Endothelial cell of umbilical vein (primary cell): ENCODE measurements at regions of chr3 and their contacts with region 1.

Region 1: DNA sequence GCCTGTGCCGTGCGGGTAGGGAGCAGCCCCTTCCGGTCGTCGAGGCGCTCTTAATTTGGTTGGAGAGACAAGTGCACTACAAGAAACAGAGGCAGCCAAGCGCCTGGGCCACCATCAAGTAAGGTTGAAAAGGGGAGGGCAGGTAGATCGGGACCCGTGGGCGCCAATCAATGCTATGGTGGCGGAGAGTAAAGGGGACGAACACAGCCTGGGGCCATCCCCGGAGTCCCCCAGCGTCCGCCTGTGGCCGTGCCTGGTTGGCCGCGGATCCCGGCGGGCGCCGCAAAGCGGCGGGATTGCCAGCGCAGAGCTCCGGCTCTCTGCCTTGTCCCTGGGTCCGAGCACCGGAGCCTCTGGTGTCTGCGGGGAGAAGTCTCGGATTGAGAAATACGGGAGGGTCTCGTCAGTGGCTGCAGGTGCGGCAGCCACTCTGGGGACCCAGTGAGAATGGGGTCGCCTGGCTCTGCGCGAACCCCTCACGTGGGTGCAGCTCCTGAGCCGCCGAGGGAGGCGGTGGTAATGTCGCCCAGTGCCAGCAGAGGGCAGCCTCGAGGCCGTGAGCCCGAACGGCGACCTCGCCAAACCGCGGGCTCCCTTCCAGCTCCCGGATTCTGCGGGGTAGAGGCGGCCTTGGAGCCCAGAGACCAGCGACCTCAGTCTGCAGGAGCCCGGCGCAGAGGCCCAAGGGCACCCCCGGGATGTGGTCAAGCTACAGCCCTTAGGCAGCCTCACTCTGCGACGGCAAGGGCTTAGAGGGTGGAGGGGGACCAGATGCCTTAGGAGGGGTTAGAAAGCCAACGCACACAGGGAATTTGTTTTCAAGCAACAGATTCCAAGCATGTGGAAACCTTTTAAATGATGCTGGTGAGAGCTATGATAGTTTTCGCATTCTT is 10.8 kb downstream of the FOXL2 start:
- DNase-seq: peak; percentile 59
- H3K4me3 ChIP-seq: peak overlapping the region in 2 of 3 experiments; percentile 0 to 25
- H3K27ac ChIP-seq: no peak overlapping the region
- H3K4me1 ChIP-seq: peaks cover 7% of the 10 kb centered on the region
- H3K27me3 ChIP-seq: peaks cover 54 to 66% of the 10 kb centered on the region in 2 experiments
- CTCF ChIP-seq: peak; percentile 84 to 94
- POLR2A ChIP-seq: no peak

Region 2: GRCh38 chr3:138479438-138479863 is 456.6 kb before region 1 on chr3:
- CTCF ChIA-PET with region 1: interaction called, 13 read pairs
- POLR2A ChIA-PET with region 1: no interaction called
- dilution Hi-C with region 1: no loop called
- intact Hi-C with region 1: loop called (anchors 5 kb)
- DNase-seq: peak; percentile 55
- H3K4me3 ChIP-seq: no peak overlapping the region
- H3K27ac ChIP-seq: no peak overlapping the region
- H3K4me1 ChIP-seq: no peaks in the 10 kb centered on the region
- H3K27me3 ChIP-seq: no peaks in the 10 kb centered on the region
- CTCF ChIP-seq: peak; percentile 79 to 87
- POLR2A ChIP-seq: no peak

Region 3: GRCh38 chr3:138862924-138863775 is 72.9 kb before region 1 on chr3:
- CTCF ChIA-PET with region 1: no interaction called
- POLR2A ChIA-PET with region 1: no interaction called
- dilution Hi-C with region 1: no loop called
- intact Hi-C with region 1: no loop called
- DNase-seq: peak; percentile 70
- H3K4me3 ChIP-seq: no peak overlapping the region
- H3K27ac ChIP-seq: peak overlapping the region; percentile 50
- H3K4me1 ChIP-seq: peaks cover 17% of the 10 kb centered on the region
- H3K27me3 ChIP-seq: no peaks in the 10 kb centered on the region
- CTCF ChIP-seq: no peak
- POLR2A ChIP-seq: no peak

Region 4: GRCh38 chr3:138909904-138910303 is 26.2 kb before region 1 on chr3:
- CTCF ChIA-PET with region 1: no interaction called
- POLR2A ChIA-PET with region 1: no interaction called
- dilution Hi-C with region 1: no loop called
- intact Hi-C with region 1: no loop called
- DNase-seq: no peak
- H3K4me3 ChIP-seq: no peak overlapping the region
- H3K27ac ChIP-seq: no peak overlapping the region
- H3K4me1 ChIP-seq: peaks cover 3% of the 10 kb centered on the region
- H3K27me3 ChIP-seq: no peaks in the 10 kb centered on the region
- CTCF ChIP-seq: no peak
- POLR2A ChIP-seq: no peak

Region 5: GRCh38 chr3:138946181-138947059 is 10.3 kb after region 1 on chr3:
- CTCF ChIA-PET with region 1: interaction called, 63 read pairs
- POLR2A ChIA-PET with region 1: no interaction called
- dilution Hi-C with region 1: no loop called
- intact Hi-C with region 1: no loop called
- DNase-seq: no peak
- H3K4me3 ChIP-seq: peak overlapping the region in 2 of 3 experiments; percentile 27 to 29
- H3K27ac ChIP-seq: no peak overlapping the region
- H3K4me1 ChIP-seq: peaks cover 16% of the 10 kb centered on the region
- H3K27me3 ChIP-seq: peaks cover 79 to 99% of the 10 kb centered on the region in 2 experiments
- CTCF ChIP-seq: peak; percentile 14 to 27
- POLR2A ChIP-seq: no peak

Region 6: GRCh38 chr3:138960417-138960852 is 24.3 kb after region 1 on chr3:
- CTCF ChIA-PET with region 1: interaction called, 11 read pairs
- POLR2A ChIA-PET with region 1: no interaction called
- dilution Hi-C with region 1: no loop called
- intact Hi-C with region 1: no loop called
- DNase-seq: no peak
- H3K4me3 ChIP-seq: no peak overlapping the region
- H3K27ac ChIP-seq: no peak overlapping the region
- H3K4me1 ChIP-seq: no peaks in the 10 kb centered on the region
- H3K27me3 ChIP-seq: peaks cover 23 to 25% of the 10 kb centered on the region in 2 experiments
- CTCF ChIP-seq: no peak
- POLR2A ChIP-seq: no peak

Region 7: GRCh38 chr3:138974462-138974861 is 38.4 kb after region 1 on chr3:
- CTCF ChIA-PET with region 1: interaction called, 59 read pairs
- POLR2A ChIA-PET with region 1: no interaction called
- dilution Hi-C with region 1: no loop called
- intact Hi-C with region 1: loop called (anchors 1 kb)
- DNase-seq: peak; percentile 16
- H3K4me3 ChIP-seq: no peak overlapping the region
- H3K27ac ChIP-seq: no peak overlapping the region
- H3K4me1 ChIP-seq: no peaks in the 10 kb centered on the region
- H3K27me3 ChIP-seq: peaks cover 0 to 2% of the 10 kb centered on the region in 2 experiments
- CTCF ChIP-seq: no peak
- POLR2A ChIP-seq: no peak

Region 8: GRCh38 chr3:139032326-139033002 is 96.4 kb after region 1 on chr3:
- CTCF ChIA-PET with region 1: no interaction called
- POLR2A ChIA-PET with region 1: no interaction called
- dilution Hi-C with region 1: no loop called
- intact Hi-C with region 1: no loop called
- DNase-seq: no peak
- H3K4me3 ChIP-seq: no peak overlapping the region
- H3K27ac ChIP-seq: no peak overlapping the region
- H3K4me1 ChIP-seq: no peaks in the 10 kb centered on the region
- H3K27me3 ChIP-seq: no peaks in the 10 kb centered on the region
- CTCF ChIP-seq: no peak
- POLR2A ChIP-seq: no peak

Region 9: DNA sequence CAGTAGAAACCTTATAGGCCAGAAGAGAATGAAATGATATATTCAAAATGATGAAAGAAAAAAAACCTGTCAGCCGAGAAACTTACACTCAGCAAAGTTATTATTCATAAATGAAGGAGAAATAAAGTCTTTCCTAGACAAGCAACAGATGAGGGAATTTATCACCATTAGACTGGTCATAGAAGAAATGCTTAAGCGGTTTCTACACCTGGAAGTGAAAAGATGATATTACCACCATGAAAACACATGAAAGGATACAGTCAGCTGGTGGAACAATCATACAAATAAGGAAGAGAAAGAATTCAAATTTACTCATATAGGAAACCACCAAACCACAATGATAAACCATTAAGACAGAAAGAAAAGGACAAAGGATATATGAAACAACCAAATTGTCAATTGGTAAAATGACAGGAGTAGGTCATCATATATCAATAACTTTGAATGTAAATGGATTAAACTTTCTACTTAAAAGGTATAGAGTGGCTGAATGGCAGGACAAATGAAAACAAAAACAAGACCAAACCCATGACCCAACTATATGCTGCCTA is 138.5 kb after region 1 on chr3:
- CTCF ChIA-PET with region 1: no interaction called
- POLR2A ChIA-PET with region 1: no interaction called
- dilution Hi-C with region 1: no loop called
- intact Hi-C with region 1: no loop called
- DNase-seq: no peak
- H3K4me3 ChIP-seq: no peak overlapping the region
- H3K27ac ChIP-seq: no peak overlapping the region
- H3K4me1 ChIP-seq: no peaks in the 10 kb centered on the region
- H3K27me3 ChIP-seq: no peaks in the 10 kb centered on the region
- CTCF ChIP-seq: no peak
- POLR2A ChIP-seq: no peak

Region 10: DNA sequence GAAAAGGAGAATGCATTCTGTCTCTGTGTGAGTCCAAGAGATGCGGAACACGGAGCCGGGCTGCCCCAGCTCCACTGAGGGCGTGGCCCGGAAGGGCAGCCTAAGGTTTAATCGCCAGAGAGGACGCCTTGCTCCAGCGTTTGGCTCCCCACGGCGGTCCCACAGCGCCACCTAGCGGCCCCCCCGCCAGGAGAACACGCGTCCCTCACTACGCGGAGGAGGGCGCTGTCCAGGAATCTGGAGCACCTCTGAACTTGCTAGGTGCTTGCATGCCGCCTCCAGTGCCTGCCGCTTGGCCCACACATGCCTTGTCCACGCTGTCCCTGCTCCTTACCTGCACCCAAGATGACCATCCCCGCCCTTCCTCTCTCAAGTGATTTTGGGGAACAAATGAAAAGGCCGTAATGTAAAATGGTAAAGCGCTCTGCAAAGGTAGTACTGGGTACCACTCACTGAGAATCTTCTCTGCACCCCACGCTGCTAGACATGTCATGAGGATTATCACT is 393.3 kb after region 1 on chr3:
- CTCF ChIA-PET with region 1: interaction called, 19 read pairs
- POLR2A ChIA-PET with region 1: no interaction called
- dilution Hi-C with region 1: no loop called
- intact Hi-C with region 1: loop called (anchors 1 kb)
- DNase-seq: peak; percentile 74
- H3K4me3 ChIP-seq: no peak overlapping the region
- H3K27ac ChIP-seq: no peak overlapping the region
- H3K4me1 ChIP-seq: peaks cover 3% of the 10 kb centered on the region
- H3K27me3 ChIP-seq: peaks cover 2 to 15% of the 10 kb centered on the region in 2 experiments
- CTCF ChIP-seq: peak; percentile 99
- POLR2A ChIP-seq: no peak